HAP-1 (cell line): ENCODE measurements at regions of chr16 and their contacts with region 1.

Region 1: GRCh38 chr16:72234387-72234786 is 62.4 kb upstream of the PMFBP1 start:
- DNase-seq: no peak
- H3K4me3 ChIP-seq: no peak overlapping the region
- H3K4me1 ChIP-seq: peaks cover 4% of the 10 kb centered on the region; the same call in 1 of the 2 replicates
- H3K27me3 ChIP-seq: no peaks in the 10 kb centered on the region

Region 2: GRCh38 chr16:72124761-72125634 is 109.4 kb before region 1 on chr16:
- in situ Hi-C with region 1: loop called (anchors 10 kb)
- DNase-seq: peak; percentile 68 to 84
- H3K4me3 ChIP-seq: no peak overlapping the region
- H3K4me1 ChIP-seq: peaks cover 4% of the 10 kb centered on the region; the same call in 1 of the 2 replicates
- H3K27me3 ChIP-seq: no peaks in the 10 kb centered on the region